ENCODE measurements at regions of chr17 and their contacts with region 1.

Region 1: DNA sequence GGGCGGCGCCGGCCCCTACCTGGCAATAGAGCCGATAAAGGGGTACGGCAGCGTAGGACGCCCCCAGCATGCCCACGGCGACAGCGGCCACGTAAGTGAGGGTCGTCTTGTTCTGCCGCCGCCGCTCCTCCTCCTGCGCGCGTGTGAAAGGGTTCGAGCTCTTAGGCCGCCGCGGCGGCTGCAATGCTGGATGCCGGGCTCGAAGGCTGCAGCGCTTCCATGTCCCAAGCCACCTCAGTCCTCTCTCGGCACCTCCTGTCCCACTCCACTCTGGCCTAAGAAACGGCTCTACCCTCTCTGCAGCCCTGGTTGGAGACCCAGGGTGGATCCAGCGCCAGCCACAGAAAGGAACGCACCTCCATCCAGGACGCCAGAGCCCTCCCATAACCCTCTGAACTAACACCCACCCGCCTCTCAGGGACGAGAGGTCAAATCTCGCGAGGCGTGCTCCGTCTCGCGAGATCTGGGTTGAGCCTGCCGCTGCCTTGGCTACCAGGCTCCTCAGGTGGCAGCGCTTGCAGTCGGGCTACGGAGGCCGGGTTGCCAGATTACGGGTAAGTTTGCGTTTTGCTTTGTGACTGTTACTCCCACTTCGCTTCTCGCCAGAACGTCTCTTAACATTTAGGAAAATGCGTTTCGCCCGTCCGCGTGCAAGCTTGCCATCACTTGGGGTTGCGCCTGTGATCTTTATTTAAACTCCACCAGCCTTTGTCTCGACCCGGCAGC is at the starts of genes COX11 and STXBP4:
- DNase-seq: peak; percentile 94 to 96 (median 95)
- H3K4me3 ChIP-seq: peak within 1 kb of the TSS; percentile 78 to 84
- H3K4me3 Mint-ChIP-seq: no peak within 1 kb of the TSS
- H3K27ac ChIP-seq: peak within 1 kb of the TSS; percentile 90
- H3K27ac Mint-ChIP-seq: no peak within 1 kb of the TSS
- H3K4me1 ChIP-seq: peaks cover 29% of the 10 kb centered on the region
- H3K4me1 Mint-ChIP-seq: peaks cover 8 to 23% (median 18%) of the 10 kb centered on the region in 4 donors
- H3K27me3 ChIP-seq: no peaks in the 10 kb centered on the region
- H3K27me3 Mint-ChIP-seq: no peaks in the 10 kb centered on the region
- total RNA-seq, gene COX11: 84.0 to 86.0 TPM
- total RNA-seq, gene STXBP4: 11.1 to 12.8 TPM

Region 2: GRCh38 chr17:54124456-54124855 is 844.0 kb before region 1 on chr17:
- CTCF ChIA-PET with region 1: no interaction called
- POLR2A ChIA-PET with region 1: no interaction called
- intact Hi-C with region 1: no loop called
- DNase-seq: no peak
- H3K4me3 ChIP-seq: no peak overlapping the region
- H3K4me3 Mint-ChIP-seq: no peak overlapping the region
- H3K27ac ChIP-seq: no peak overlapping the region
- H3K27ac Mint-ChIP-seq: no peak overlapping the region
- H3K4me1 ChIP-seq: no peaks in the 10 kb centered on the region
- H3K4me1 Mint-ChIP-seq: no peaks in the 10 kb centered on the region
- H3K27me3 ChIP-seq: no peaks in the 10 kb centered on the region
- H3K27me3 Mint-ChIP-seq: no peaks in the 10 kb centered on the region

Region 3: DNA sequence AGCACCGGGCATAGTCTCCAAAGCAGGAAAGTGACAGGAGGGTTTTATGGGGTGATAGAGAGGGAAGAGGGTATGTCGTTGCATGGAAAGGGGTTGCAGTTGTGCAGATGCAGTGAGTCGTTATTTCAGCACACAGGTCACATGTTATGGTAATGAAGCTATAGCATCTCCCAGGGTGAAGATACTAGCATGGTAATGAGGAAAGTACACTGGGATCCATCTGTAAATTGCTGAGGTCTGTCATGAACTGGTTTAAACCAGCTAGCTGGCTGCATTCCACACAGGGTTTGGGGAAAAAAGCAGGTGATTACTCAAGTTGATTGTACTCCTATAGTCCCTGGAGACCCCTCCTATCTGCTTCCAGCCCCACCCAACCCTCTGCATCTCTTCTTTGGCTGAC is 11.6 kb before region 1 on chr17:
- CTCF ChIA-PET with region 1: no interaction called
- POLR2A ChIA-PET with region 1: no interaction called
- intact Hi-C with region 1: loop called (anchors 1 kb)
- DNase-seq: no peak
- H3K4me3 ChIP-seq: no peak overlapping the region
- H3K4me3 Mint-ChIP-seq: no peak overlapping the region
- H3K27ac ChIP-seq: no peak overlapping the region
- H3K27ac Mint-ChIP-seq: no peak overlapping the region
- H3K4me1 ChIP-seq: no peaks in the 10 kb centered on the region
- H3K4me1 Mint-ChIP-seq: no peaks in the 10 kb centered on the region
- H3K27me3 ChIP-seq: no peaks in the 10 kb centered on the region
- H3K27me3 Mint-ChIP-seq: no peaks in the 10 kb centered on the region